Adrenal gland (tissue), 19 donors: ENCODE measurements at regions of chr11 and their contacts with region 1.

Region 1: GRCh38 chr11:14148653-14149273 is 186.2 kb downstream of the SPON1 start:
- DNase-seq: no peak
- H3K4me3 ChIP-seq: no peak overlapping the region
- H3K27ac ChIP-seq: no peak overlapping the region
- H3K4me1 ChIP-seq: no peaks in the 10 kb centered on the region
- H3K27me3 ChIP-seq: no peaks in the 10 kb centered on the region
- CTCF ChIP-seq: peak; percentile 40 to 67 (median 64)
- POLR2A ChIP-seq: no peak

Region 2: DNA sequence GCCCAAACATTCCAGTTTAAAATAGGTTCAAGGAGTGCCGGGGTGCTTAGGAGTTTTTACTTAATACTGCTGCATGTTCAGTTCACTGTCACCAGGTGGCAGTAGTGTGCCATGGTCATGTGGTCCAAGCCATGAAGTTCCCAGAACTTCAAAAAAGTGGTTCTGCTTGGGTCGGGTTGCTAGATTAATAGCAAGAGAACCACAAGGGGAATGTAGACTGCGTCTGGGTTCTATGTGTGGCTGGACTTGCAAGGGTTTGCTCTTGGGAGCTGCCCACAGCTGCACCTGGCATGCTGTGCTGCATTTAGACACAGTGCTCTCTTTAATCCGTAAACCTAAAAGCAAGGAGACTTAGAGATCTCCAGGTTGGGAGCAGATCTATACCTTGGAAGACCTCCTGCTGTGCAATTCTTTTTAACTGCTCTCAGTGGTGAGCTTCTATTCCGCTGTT is 192.8 kb before region 1 on chr11:
- intact Hi-C with region 1: loop called (anchors 5 to 10 kb)
- DNase-seq: peak; percentile 53 to 85 (median 64)
- H3K4me3 ChIP-seq: no peak overlapping the region
- H3K27ac ChIP-seq: no peak overlapping the region
- H3K4me1 ChIP-seq: no peaks in the 10 kb centered on the region
- H3K27me3 ChIP-seq: peaks cover 4% of the 10 kb centered on the region
- CTCF ChIP-seq: peak; percentile 80 to 94 (median 90)
- POLR2A ChIP-seq: no peak